Activated B cell treated with CpG ODN at 0.5 μM for 24 hours (primary cell): ENCODE measurements at regions of chr3 and their contacts with region 1.

Region 1: GRCh38 chr3:187025656-187026316 is 95.5 kb downstream of the ST6GAL1 start:
- DNase-seq: no peak
- ATAC-seq: peak; percentile 51
- H3K4me3 Mint-ChIP-seq: peak overlapping the region; percentile 84
- H3K27ac Mint-ChIP-seq: peak overlapping the region; percentile 93
- H3K4me1 Mint-ChIP-seq: peaks cover 93% of the 10 kb centered on the region
- H3K27me3 Mint-ChIP-seq: no peaks in the 10 kb centered on the region
- CTCF ChIP-seq: no peak

Region 2: DNA sequence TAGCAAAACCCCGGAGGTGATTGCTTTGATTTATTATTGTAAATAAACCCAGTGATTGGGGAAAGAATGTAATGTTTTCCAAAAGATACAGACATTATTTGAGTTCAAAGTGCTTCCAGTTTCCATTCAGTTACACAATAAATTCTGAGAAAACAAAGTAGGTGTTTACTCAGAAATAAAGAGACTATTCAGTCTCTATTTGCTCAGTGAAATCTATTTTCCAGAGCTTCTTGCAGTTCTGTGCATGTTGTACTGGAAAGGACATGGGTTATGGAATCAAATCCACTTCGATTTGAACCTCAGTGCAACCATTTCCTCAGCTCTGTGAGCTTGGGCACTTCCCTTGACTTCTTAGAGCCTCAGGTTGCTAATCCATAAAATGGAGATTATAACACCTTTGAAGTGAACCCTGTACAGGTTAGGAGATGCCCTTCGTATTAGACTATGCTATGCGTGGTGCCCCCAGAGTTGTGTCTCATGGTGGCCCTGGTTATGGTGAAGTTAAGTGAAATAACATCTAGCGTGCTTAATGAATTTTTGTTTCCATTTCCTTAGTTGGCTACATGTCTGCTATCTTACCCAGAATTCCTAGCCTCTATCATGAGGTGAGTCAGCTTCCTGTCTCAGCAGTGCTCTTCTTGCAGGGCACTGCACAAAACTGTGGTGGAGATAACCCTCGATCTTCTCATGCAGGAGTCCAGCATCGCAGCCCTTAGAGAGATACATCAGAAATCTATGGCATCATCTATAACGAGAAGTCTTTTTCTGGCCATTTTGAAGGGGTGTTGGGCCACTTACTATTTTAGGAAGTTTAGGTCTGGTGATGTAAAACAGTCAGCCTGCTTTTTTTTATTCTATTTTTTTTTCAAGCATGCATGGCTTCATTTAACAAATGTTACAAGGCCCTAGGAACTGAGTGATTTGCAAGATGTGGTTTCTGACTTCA is 15.8 kb after region 1 on chr3:
- CTCF ChIA-PET with region 1: interaction called, 5 read pairs
- POLR2A ChIA-PET with region 1: interaction called, 39 read pairs
- intact Hi-C with region 1: loop called (anchors 1 kb)
- DNase-seq: no peak
- ATAC-seq: peak; percentile 81
- H3K4me3 Mint-ChIP-seq: peak overlapping the region; percentile 74
- H3K27ac Mint-ChIP-seq: peak overlapping the region; percentile 97
- H3K4me1 Mint-ChIP-seq: peaks cover 83% of the 10 kb centered on the region
- H3K27me3 Mint-ChIP-seq: no peaks in the 10 kb centered on the region
- CTCF ChIP-seq: no peak

Region 3: GRCh38 chr3:187120326-187120725 is 94.5 kb after region 1 on chr3:
- CTCF ChIA-PET with region 1: no interaction called
- POLR2A ChIA-PET with region 1: no interaction called
- intact Hi-C with region 1: no loop called
- DNase-seq: no peak
- ATAC-seq: no peak
- H3K4me3 Mint-ChIP-seq: no peak overlapping the region
- H3K27ac Mint-ChIP-seq: no peak overlapping the region
- H3K4me1 Mint-ChIP-seq: peaks cover 14% of the 10 kb centered on the region
- H3K27me3 Mint-ChIP-seq: no peaks in the 10 kb centered on the region
- CTCF ChIP-seq: no peak